SK-N-SH (cell line): ENCODE measurements at regions of chr13 and their contacts with region 1.

Region 1: DNA sequence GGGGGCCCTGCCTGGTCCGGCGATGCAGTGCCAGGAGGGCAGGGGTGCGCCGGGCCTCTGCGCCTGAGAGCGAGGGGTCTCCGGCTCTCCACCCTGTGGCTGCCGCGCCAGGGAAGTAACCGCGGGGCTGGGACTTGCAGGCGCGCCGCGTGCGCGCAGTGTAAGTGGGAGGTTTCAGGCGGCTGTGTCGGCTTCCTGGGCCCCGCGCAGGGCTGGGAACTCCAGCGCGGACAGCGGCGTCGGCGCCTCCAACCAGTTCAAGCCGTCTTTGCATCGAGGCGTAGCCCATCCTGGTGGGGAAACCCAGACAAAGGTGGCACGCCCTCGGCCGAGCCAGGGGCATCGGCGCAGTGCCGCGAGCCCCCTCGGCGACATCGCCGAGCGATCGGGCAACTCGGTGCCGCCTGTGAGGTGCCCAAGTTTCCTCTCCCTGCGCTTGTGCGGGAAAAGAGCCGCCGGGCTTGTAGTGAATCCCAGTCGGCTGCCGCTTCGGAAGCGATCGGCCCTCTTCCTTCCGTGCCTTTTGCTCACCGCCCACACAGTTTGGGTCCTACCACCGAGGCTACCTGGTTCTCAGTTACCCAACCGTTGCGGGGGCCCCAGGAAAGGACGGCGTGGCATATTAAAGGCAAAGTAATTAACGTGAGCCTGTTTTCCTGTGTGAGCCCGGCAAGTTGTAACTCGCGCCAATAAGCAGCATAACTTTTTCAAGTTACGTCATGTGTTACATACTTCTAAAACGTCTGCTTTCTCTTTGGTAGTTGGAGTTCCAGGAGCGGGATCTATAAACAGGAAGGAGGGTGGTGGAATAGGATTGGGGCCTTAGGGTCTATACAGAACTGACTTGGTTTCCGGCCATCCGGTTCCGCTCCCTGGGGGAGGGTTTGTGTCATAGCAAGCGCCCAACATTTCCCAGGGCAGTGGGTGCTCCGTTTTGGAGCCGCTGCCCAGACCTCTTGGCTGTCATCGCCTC is 1.2 kb downstream of the LRCH1 start:
- DNase-seq: peak; percentile 77
- H3K4me3 ChIP-seq: peak overlapping the region; percentile 85 to 97
- H3K27ac ChIP-seq: peak overlapping the region; percentile 88 to 91
- H3K4me1 ChIP-seq: peaks cover 13% of the 10 kb centered on the region in 2 experiments
- H3K27me3 ChIP-seq: no peaks in the 10 kb centered on the region
- CTCF ChIP-seq: peak; percentile 18; the same call in 1 of the 2 replicates
- EP300 ChIP-seq: no peak
- RAD21 ChIP-seq: no peak

Region 2: GRCh38 chr13:46535829-46536228 is 18.3 kb before region 1 on chr13:
- CTCF ChIA-PET with region 1: interaction called, 21 read pairs
- POLR2A ChIA-PET with region 1: no interaction called
- DNase-seq: no peak
- H3K4me3 ChIP-seq: no peak overlapping the region
- H3K27ac ChIP-seq: no peak overlapping the region
- H3K4me1 ChIP-seq: peaks cover 4 to 11% of the 10 kb centered on the region in 2 experiments; a peak in 3 of 4 replicates
- H3K27me3 ChIP-seq: no peaks in the 10 kb centered on the region
- CTCF ChIP-seq: no peak
- EP300 ChIP-seq: no peak
- RAD21 ChIP-seq: no peak

Region 3: GRCh38 chr13:46603165-46603603 is 49.0 kb after region 1 on chr13:
- CTCF ChIA-PET with region 1: interaction called, 19 read pairs
- POLR2A ChIA-PET with region 1: no interaction called
- DNase-seq: no peak
- H3K4me3 ChIP-seq: no peak overlapping the region
- H3K27ac ChIP-seq: no peak overlapping the region
- H3K4me1 ChIP-seq: peaks cover 14 to 20% of the 10 kb centered on the region in 2 experiments; a peak in 2 of 4 replicates
- H3K27me3 ChIP-seq: no peaks in the 10 kb centered on the region
- CTCF ChIP-seq: peak; percentile 47
- EP300 ChIP-seq: no peak
- RAD21 ChIP-seq: peak; percentile 45

Region 4: DNA sequence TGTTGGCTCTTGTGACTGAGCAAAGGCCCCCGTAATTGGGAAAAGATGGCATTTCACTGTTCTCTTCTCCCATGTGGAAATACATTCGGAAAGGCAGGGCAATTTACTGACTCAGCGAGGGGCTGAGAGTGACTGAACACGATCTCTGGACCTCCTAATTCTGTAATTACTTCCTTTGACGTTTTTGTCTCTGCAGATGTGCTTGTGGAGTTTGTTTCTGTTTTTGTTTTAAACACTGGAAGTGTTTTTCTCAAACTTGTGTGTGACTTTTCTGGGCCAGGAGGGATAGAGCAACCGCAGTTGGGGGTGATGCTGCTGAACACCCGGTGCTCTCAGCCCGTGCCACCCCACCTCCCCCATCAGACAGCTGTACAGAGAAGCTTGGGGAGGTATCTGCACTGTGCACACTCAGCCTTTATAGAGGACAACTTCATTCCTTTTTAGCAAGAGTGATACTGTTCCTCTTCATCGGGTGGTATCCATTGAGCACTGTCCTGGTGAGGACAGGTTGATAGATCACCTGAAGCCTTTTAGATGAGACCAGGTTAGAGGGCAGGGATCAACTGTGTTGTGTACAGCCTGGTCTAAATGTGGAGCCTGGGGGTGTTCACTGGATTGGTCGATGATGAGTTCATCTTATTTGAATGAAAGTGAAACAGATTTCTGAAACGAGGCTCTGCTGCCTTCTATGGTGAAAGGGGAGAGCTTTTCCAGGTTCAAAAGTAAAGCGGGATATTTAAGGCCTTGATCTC is 125.4 kb after region 1 on chr13:
- CTCF ChIA-PET with region 1: interaction called, 23 read pairs
- POLR2A ChIA-PET with region 1: no interaction called
- DNase-seq: peak; percentile 64
- H3K4me3 ChIP-seq: peak overlapping the region; percentile 38 to 63
- H3K27ac ChIP-seq: peak overlapping the region; percentile 79 to 89
- H3K4me1 ChIP-seq: peaks cover 30 to 43% of the 10 kb centered on the region in 2 experiments; a peak in 3 of 4 replicates
- H3K27me3 ChIP-seq: no peaks in the 10 kb centered on the region
- CTCF ChIP-seq: peak; percentile 25; the same call in 1 of the 2 replicates
- EP300 ChIP-seq: 0 out of 4 replicates have a peak, but pooled peaks of 1 of the 2 experiments have one; percentile 7
- RAD21 ChIP-seq: peak; percentile 35

Region 5: DNA sequence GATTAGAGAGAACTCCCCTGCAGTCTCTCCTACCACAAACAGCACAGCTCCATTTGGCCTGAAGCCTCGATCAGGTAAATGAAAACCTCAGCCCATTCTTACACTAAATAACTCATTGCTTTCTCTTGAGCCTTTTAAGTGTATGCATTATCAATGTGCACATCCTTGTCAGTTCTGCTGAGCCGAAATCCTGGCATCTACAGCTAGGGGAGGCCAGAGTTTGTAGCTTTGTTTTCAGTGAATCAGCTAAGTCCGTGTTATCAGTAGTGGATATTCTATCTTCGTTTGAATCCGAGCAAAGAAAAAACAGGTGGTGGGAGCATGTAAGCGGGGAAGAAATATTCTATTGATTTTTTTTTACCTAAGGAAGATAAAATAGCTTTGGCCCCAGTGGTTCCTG is 158.4 kb after region 1 on chr13:
- CTCF ChIA-PET with region 1: interaction called, 23 read pairs
- POLR2A ChIA-PET with region 1: no interaction called
- DNase-seq: no peak
- H3K4me3 ChIP-seq: no peak overlapping the region
- H3K27ac ChIP-seq: no peak overlapping the region
- H3K4me1 ChIP-seq: peaks cover 0 to 19% of the 10 kb centered on the region in 2 experiments; a peak in 3 of 4 replicates
- H3K27me3 ChIP-seq: no peaks in the 10 kb centered on the region
- CTCF ChIP-seq: no peak
- EP300 ChIP-seq: no peak
- RAD21 ChIP-seq: no peak

Region 6: GRCh38 chr13:47326061-47326460 is 771.9 kb after region 1 on chr13:
- CTCF ChIA-PET with region 1: no interaction called
- POLR2A ChIA-PET with region 1: no interaction called
- DNase-seq: no peak
- H3K4me3 ChIP-seq: no peak overlapping the region
- H3K27ac ChIP-seq: no peak overlapping the region
- H3K4me1 ChIP-seq: peaks cover 0 to 3% of the 10 kb centered on the region in 2 experiments; a peak in 1 of 4 replicates
- H3K27me3 ChIP-seq: no peaks in the 10 kb centered on the region
- CTCF ChIP-seq: no peak
- EP300 ChIP-seq: peak; percentile 61 to 69; a peak in 3 of 4 replicates
- RAD21 ChIP-seq: no peak